Activated B cell treated with CpG ODN at 0.5 μM for 24 hours (primary cell): ENCODE measurements at regions of chr1 and their contacts with region 1.

Region 1: DNA sequence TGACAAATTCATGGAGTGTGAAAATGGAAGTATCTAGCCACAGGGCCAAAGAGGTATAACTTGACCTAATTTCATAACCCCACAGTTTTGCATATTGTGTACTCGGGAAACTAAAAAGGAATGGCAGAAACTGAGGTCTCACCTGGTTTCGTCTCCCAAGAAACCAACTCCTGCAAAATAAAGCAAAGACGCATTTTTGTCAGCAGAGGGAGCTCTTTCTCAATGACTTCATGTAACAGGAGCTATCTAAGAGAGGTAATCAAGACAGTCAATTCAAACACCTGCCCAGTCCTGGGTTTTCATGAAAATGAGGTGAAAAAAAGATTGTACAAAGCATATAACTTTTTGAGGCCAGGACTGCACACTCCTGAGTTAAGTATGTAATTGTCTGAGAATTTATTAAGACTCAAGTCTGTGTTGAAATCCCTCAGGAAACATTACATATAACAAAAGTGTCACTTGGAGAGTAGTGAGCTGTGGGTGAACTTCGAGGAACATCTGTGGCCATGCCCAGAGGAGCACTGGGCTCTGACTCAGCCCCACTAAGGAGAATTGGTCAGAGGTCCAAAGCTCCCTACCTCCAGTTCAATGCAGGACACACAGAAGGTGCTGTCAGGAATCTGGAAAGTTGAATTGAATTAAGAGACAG is 17.6 kb downstream of the FCRL4 start:
- DNase-seq: no peak
- ATAC-seq: no peak
- H3K4me3 Mint-ChIP-seq: peak overlapping the region; percentile 28
- H3K27ac Mint-ChIP-seq: peak overlapping the region; percentile 78
- H3K4me1 Mint-ChIP-seq: peaks cover 75% of the 10 kb centered on the region
- H3K27me3 Mint-ChIP-seq: no peaks in the 10 kb centered on the region
- CTCF ChIP-seq: peak; percentile 80

Region 2: GRCh38 chr1:157562515-157562914 is 17.8 kb before region 1 on chr1:
- CTCF ChIA-PET with region 1: interaction called, 12 read pairs
- POLR2A ChIA-PET with region 1: interaction called, 3 read pairs
- intact Hi-C with region 1: loop called (anchors 1 kb)
- DNase-seq: no peak
- ATAC-seq: peak; percentile 29
- H3K4me3 Mint-ChIP-seq: peak overlapping the region; percentile 65
- H3K27ac Mint-ChIP-seq: peak overlapping the region; percentile 73
- H3K4me1 Mint-ChIP-seq: peaks cover 70% of the 10 kb centered on the region
- H3K27me3 Mint-ChIP-seq: no peaks in the 10 kb centered on the region
- CTCF ChIP-seq: no peak

Region 3: GRCh38 chr1:157652859-157653493 is 72.7 kb after region 1 on chr1:
- CTCF ChIA-PET with region 1: interaction called, 6 read pairs
- POLR2A ChIA-PET with region 1: interaction called, 4 read pairs
- intact Hi-C with region 1: loop called (anchors 2 kb)
- DNase-seq: no peak
- ATAC-seq: peak; percentile 90
- H3K4me3 Mint-ChIP-seq: peak overlapping the region; percentile 69
- H3K27ac Mint-ChIP-seq: peak overlapping the region; percentile 82
- H3K4me1 Mint-ChIP-seq: peaks cover 44% of the 10 kb centered on the region
- H3K27me3 Mint-ChIP-seq: no peaks in the 10 kb centered on the region
- CTCF ChIP-seq: no peak

Region 4: DNA sequence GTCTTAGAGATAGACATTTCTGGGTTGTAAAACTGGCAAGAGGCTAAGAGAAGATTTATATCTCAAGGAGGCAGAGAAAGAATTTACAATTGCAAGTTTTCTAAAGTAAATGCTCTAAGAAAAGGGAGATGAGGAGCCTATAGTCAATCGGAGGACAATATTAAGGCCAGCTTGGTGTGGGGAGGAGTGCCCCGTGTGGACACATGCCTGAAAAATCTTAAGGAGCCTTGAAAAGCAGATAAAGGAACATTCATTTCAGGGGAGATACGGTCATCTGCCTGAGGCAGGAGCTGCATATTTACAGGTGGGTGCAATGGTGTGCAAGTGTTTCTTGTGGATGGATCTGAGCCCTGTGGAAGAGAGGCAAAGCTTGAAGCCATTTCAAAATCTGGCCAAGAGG is 171.0 kb after region 1 on chr1:
- CTCF ChIA-PET with region 1: interaction called, 12 read pairs
- POLR2A ChIA-PET with region 1: no interaction called
- intact Hi-C with region 1: no loop called
- DNase-seq: no peak
- ATAC-seq: no peak
- H3K4me3 Mint-ChIP-seq: no peak overlapping the region
- H3K27ac Mint-ChIP-seq: peak overlapping the region; percentile 70
- H3K4me1 Mint-ChIP-seq: peaks cover 39% of the 10 kb centered on the region
- H3K27me3 Mint-ChIP-seq: no peaks in the 10 kb centered on the region
- CTCF ChIP-seq: no peak

Region 5: GRCh38 chr1:157806431-157807149 is 226.3 kb after region 1 on chr1:
- CTCF ChIA-PET with region 1: interaction called, 10 read pairs
- POLR2A ChIA-PET with region 1: interaction called, 7 read pairs
- intact Hi-C with region 1: no loop called
- DNase-seq: peak; percentile 60
- ATAC-seq: peak; percentile 91
- H3K4me3 Mint-ChIP-seq: peak overlapping the region; percentile 61
- H3K27ac Mint-ChIP-seq: peak overlapping the region; percentile 88
- H3K4me1 Mint-ChIP-seq: peaks cover 98% of the 10 kb centered on the region
- H3K27me3 Mint-ChIP-seq: no peaks in the 10 kb centered on the region
- CTCF ChIP-seq: no peak

Region 6: DNA sequence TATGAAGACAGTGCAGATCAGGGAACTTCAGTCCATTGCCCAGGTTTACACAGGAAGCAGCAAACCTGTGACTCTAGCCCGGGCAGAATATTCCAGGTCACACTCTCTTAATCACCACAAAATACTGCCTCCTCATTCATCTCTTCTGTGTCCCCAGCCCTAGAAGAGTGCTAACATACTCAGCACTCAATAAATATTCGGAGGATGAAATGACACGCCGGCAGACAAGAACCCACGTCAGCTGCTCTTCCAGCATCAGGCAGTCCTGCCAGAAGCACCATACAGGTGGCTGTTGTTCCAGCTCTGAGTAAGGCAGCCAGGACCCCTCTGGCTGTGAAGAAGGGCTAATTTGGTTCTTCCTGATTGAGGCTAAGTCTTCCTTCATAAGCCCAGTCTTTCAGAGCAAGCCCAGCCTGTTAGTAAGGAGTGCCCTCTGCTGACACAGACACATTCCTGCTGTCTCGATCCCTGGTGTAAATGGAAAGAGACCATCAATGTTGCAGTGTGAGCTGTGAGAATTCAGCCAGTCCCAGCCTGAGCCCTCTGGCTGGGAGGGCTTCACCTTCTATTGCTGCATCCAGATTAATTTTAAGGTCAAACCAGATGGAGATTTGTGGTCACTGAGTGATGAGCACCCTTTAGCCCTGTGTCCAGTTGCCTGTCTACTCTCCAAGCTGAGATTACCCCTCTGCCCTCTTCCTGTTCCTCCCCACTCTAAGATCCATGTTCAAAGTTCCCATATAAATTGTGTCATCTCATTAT is 368.2 kb after region 1 on chr1:
- CTCF ChIA-PET with region 1: interaction called, 30 read pairs
- POLR2A ChIA-PET with region 1: no interaction called
- intact Hi-C with region 1: loop called (anchors 1 kb)
- DNase-seq: no peak
- ATAC-seq: peak; percentile 77
- H3K4me3 Mint-ChIP-seq: no peak overlapping the region
- H3K27ac Mint-ChIP-seq: no peak overlapping the region
- H3K4me1 Mint-ChIP-seq: peaks cover 24% of the 10 kb centered on the region
- H3K27me3 Mint-ChIP-seq: peaks cover 6% of the 10 kb centered on the region
- CTCF ChIP-seq: peak; percentile 52